Activated T-helper 1 cell treated with anti-CD3 and anti-CD28 coated beads, Interleukin-12 subunit alpha, Interleukin-12 subunit beta, Interleukin-2, Interleukin-4 antibody, amounts not matched to agents 30 ng/mL and 10 ng/mL and 1 ng/mL, durations not matched to agents 14 hours and 24 hours and 36 hours (primary cell): ENCODE measurements at regions of chr12 and their contacts with region 1.

Region 1: DNA sequence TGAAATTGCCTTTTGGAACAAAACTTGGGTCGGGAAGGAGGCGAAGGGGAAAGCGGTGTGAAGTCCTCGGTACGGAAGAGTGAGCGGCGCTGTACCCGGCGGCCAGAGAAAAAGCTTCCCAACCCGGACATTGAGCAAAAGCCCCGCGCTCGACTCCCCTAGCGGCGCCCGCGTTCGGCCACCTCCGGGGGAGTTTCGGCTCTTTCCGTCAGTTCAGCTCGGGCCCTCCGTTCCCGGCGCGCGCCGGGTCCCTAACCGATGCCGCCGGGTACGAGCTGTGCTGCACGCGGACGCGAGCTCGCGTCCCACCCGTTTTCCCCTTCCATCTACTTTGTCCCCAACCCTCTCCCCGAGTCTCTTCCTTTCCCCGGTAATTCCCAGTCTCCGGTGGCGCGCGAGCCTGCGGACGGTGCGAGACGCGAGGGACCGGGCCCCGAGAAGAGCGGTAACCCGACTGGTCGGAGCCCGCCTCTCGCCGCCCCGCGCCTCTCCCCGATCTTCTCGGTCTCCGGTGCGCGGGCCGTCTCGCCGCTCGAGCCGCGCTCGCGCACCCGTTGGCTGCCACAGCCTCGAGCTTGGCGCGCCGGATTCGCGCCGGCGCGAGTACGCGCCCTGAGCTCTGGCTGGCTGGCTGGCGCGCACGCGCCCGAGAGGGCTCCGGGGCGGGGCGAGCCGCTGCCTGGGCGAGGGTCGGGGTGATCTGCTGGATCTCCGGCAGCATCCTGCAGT is 446 bp upstream of the SPATS2 start:
- DNase-seq: peak; percentile 89
- H3K4me3 Mint-ChIP-seq: peak overlapping the region; percentile 87
- H3K27ac Mint-ChIP-seq: peak overlapping the region; percentile 94
- H3K4me1 Mint-ChIP-seq: peaks cover 48% of the 10 kb centered on the region
- H3K27me3 Mint-ChIP-seq: no peaks in the 10 kb centered on the region

Region 2: GRCh38 chr12:49264738-49265515 is 101.9 kb before region 1 on chr12 and contains the start of gene TUBA1C:
- intact Hi-C with region 1: no loop called
- DNase-seq: peak; percentile 92
- H3K4me3 Mint-ChIP-seq: peak within 1 kb of the TSS; percentile 99
- H3K27ac Mint-ChIP-seq: peak within 1 kb of the TSS; percentile 100
- H3K4me1 Mint-ChIP-seq: peaks cover 38% of the 10 kb centered on the region
- H3K27me3 Mint-ChIP-seq: no peaks in the 10 kb centered on the region
- total RNA-seq, gene TUBA1C: 261 and 270 TPM in 2 replicates

Region 3: DNA sequence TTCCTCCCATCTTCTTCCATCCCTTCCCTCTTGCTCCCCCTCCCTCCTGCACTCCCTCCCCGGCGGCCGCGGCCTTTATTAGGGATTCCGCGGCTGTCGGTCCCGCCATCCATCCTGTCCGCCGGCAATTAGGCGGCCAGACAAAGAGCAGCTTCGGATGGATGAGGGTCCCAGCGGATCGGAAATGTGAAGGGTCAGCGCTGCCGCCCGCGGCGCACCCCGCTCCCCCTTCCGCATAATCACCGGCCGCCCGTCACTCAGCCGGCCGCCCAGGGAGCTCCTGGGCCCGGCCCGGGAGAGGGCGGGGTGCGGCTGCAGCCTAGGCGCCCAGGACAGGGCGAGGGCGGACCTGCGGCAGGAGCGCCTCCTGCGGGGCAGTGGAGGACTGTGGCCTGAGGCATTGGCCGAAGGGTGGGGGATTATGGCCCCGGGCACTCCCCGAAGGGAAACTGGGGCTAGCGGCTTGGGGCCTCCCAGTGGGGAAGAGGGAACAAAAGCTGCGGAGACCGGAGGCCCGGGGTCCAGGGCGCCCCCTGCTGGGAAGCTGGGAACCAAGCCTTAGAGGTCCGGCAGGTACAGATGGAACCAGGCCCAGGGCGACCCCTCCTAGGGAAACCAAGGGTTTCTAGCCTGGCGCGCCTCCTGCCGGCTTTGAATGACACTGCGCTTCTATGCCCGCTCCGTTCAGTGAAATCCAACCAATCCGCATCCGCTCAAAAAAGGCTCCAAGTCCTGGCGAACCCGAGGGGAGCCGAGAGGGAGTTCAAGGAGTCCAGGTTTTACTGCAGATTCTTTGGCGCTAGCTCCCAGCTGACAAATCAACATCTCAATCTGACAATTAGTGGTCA is 24.5 kb before region 1 on chr12:
- intact Hi-C with region 1: loop called (anchors 2 kb)
- DNase-seq: peak; percentile 56
- H3K4me3 Mint-ChIP-seq: peak overlapping the region; percentile 37
- H3K27ac Mint-ChIP-seq: no peak overlapping the region
- H3K4me1 Mint-ChIP-seq: peaks cover 35% of the 10 kb centered on the region
- H3K27me3 Mint-ChIP-seq: peaks cover 77% of the 10 kb centered on the region

Region 4: GRCh38 chr12:49451468-49452259 is 84.8 kb after region 1 on chr12:
- intact Hi-C with region 1: loop called (anchors 2 kb)
- DNase-seq: no peak
- H3K4me3 Mint-ChIP-seq: peak overlapping the region; percentile 1
- H3K27ac Mint-ChIP-seq: peak overlapping the region; percentile 32
- H3K4me1 Mint-ChIP-seq: peaks cover 23% of the 10 kb centered on the region
- H3K27me3 Mint-ChIP-seq: no peaks in the 10 kb centered on the region

Region 5: DNA sequence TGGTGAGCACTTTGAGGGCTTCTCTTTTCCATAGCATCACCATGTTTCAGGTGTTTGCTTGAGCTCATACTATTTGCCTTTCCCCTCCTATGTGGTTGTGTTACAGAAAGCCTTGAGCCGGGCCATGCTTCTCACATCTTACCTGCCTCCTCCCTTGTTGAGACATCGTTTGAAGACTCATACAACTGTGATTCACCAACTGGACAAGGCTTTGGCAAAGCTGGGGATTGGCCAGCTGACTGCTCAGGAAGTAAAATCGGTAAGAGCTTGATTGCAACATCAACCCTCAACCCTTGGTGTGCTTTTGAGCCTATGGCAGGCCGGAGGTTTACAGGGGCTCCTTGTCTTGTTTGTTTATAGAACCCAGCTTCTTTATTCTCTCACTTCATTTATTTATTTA is 1689.4 kb after region 1 on chr12:
- intact Hi-C with region 1: no loop called
- DNase-seq: no peak
- H3K4me3 Mint-ChIP-seq: no peak overlapping the region
- H3K27ac Mint-ChIP-seq: peak overlapping the region; percentile 29
- H3K4me1 Mint-ChIP-seq: peaks cover 7% of the 10 kb centered on the region
- H3K27me3 Mint-ChIP-seq: no peaks in the 10 kb centered on the region